Vagina (tissue), 2 donors: ENCODE measurements at regions of chr19 and their contacts with region 1.

Region 1: DNA sequence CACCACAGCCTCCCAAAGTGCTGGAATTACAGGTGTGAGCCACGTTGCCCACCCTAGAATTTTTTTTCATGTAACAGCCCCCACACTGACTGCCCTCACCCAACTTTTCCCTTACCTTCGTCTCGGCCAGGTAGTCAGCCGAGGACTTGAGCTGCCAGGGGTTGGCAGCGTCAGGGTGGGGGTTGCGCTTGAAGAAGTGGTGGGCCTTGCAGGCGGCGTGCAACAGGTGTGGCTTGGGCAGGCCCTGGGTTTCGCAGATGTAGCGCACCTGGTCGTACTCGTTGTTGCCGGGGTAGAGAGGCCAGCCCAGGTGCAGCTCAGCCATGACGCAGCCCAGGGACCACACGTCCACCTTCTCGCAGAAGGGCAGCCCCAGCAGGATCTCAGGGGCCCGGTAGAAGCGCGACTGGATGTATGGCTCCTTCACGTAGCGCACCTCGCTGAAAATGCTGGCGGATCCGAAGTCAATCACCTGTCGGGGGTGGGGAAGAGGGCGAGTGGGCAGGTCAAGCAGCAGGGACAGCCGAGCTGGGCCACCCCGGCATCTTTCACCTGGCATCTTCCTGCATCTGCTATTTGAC is 6.2 kb downstream of the HIPK4 start:
- DNase-seq: no peak
- H3K4me3 ChIP-seq: no peak overlapping the region
- H3K27ac ChIP-seq: no peak overlapping the region
- H3K4me1 ChIP-seq: no peaks in the 10 kb centered on the region
- H3K27me3 ChIP-seq: no peaks in the 10 kb centered on the region
- CTCF ChIP-seq: no peak
- POLR2A ChIP-seq: no peak

Region 2: GRCh38 chr19:40365613-40366401 is 18.0 kb before region 1 on chr19:
- intact Hi-C with region 1: loop called (anchors 1 kb)
- DNase-seq: no peak
- H3K4me3 ChIP-seq: peak overlapping the region; percentile 24 to 48
- H3K27ac ChIP-seq: peak overlapping the region; percentile 15
- H3K4me1 ChIP-seq: peaks cover 19% of the 10 kb centered on the region
- H3K27me3 ChIP-seq: no peaks in the 10 kb centered on the region
- CTCF ChIP-seq: no peak
- POLR2A ChIP-seq: no peak

Region 3: DNA sequence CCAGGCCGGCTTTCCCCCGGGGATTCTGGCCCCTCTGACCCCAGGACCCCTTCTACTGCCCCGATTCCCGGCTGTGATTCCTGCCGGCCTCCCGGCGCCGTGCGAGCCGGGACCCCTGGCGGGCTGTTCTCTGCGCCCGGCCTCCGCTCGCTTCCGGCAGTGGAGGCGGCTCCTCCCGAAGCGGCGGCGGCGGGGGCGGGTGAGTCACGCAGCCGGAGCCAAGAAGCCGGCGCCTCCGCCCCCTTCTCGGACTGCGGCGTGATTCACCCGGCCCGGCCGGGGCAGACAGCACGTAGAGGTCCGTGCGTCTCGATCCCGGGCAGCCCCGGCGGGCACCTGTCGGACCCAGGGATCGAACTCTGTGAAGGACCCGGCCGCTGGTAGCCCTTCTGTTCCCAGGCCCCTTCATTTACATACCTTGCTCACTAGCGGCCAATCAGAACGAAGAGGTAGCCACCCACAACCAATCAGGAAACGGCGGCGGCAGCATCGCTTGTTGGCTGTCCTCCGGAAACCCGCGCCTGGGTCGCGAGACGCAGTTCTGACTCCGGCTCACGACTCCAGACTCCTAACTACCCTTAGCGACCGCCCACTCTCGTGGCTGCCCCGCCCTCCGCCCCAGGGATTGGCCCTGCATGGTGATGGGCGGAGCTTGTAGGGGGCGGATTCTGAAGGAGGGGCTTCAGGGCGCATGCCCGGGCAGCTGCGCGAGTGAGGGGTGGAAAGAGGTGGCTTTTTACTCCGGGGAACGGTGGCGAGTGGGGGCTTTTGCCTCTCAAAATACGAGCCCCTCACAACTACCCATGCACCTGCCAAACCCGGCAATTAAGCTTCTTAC is 41.9 kb after region 1 on chr19 and contains the start of gene SERTAD1:
- intact Hi-C with region 1: no loop called
- DNase-seq: peak; percentile 99 to 100
- H3K4me3 ChIP-seq: peak within 1 kb of the TSS; percentile 63 to 87
- H3K27ac ChIP-seq: peak within 1 kb of the TSS; percentile 99
- H3K4me1 ChIP-seq: peaks cover 47% of the 10 kb centered on the region
- H3K27me3 ChIP-seq: no peaks in the 10 kb centered on the region
- CTCF ChIP-seq: peak; percentile 53 to 99 (median 65)
- POLR2A ChIP-seq: peak; percentile 78 to 98
- total RNA-seq, gene SERTAD1: 14.2 TPM